Panc1 (cell line): ENCODE measurements at regions of chr10 and their contacts with region 1.

Region 1: DNA sequence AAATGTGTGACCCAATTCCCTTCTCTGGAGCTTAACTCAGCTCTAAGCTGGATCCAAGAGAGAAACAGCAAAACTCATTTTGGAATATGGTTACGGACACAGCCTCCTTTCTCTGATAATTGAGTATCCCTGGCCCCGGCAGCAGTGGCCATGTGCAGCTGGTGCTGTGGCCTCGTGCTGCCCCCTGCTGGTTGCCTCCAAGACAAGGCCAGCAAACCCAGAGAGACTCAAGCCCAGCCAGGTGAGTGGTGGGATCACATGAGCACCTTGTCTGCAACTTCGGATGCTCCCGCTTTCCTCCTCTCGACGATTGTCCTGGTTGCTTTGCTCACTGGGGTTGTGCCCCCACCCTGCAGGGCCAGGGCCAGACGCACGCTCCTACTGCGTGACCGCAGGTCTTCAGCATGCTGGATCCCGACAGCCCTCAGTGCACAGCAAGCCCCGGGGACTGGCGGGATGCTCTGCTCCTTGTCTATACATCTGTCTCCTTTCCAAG is 19.4 kb downstream of the SFTPD start:
- DNase-seq: peak; percentile 43
- ATAC-seq: peak; percentile 96
- H3K4me3 ChIP-seq: no peak overlapping the region
- H3K27ac ChIP-seq: no peak overlapping the region
- H3K4me1 ChIP-seq: no peaks in the 10 kb centered on the region
- H3K27me3 ChIP-seq: peaks cover 24% of the 10 kb centered on the region
- CTCF ChIP-seq: peak; percentile 95

Region 2: GRCh38 chr10:79542626-79543025 is 386.8 kb before region 1 on chr10:
- CTCF ChIA-PET with region 1: no interaction called
- POLR2A ChIA-PET with region 1: no interaction called
- in situ Hi-C with region 1: no loop called
- intact Hi-C with region 1: loop called (anchors 5 kb)
- DNase-seq: no peak
- ATAC-seq: no peak
- H3K4me3 ChIP-seq: no peak overlapping the region
- H3K27ac ChIP-seq: no peak overlapping the region
- H3K4me1 ChIP-seq: no peaks in the 10 kb centered on the region
- H3K27me3 ChIP-seq: peaks cover 2% of the 10 kb centered on the region; the same call in 1 of the 2 replicates
- CTCF ChIP-seq: no peak

Region 3: DNA sequence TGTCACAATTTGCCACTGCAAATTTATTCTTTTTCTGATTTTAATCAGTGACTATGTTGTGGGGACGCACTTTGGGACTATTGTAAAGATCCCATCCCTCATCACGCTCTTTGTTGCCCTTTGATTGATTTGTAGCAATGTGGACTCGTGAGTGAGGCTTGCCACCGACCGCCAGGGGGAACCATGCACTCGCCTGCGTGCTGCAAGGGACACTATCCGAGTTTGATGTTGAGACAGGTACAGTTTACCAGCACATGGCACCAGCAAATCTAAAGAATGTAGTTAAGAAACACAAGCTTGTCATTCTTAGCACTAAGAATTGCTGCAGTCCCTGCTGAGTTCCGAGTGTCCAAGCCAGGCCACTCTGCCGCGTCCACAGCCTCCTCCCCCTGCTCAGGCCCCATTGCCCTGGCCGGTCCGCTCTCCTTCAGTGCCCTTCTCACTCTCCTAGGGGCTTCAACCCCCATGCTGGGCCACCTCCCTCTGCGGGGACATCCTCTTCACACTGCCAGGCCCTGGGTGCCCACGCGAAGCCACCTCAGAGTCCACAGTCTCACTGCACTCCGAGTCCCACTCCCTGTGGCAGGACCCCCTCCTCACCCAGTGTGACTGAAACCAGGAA is 367.2 kb before region 1 on chr10:
- CTCF ChIA-PET with region 1: no interaction called
- POLR2A ChIA-PET with region 1: no interaction called
- in situ Hi-C with region 1: no loop called
- intact Hi-C with region 1: loop called (anchors 5 kb)
- DNase-seq: peak; percentile 39
- ATAC-seq: peak; percentile 96
- H3K4me3 ChIP-seq: no peak overlapping the region
- H3K27ac ChIP-seq: no peak overlapping the region
- H3K4me1 ChIP-seq: no peaks in the 10 kb centered on the region
- H3K27me3 ChIP-seq: peaks cover 22% of the 10 kb centered on the region
- CTCF ChIP-seq: peak; percentile 98